ENCODE measurements at regions of chr14 and their contacts with region 1.

Region 1: DNA sequence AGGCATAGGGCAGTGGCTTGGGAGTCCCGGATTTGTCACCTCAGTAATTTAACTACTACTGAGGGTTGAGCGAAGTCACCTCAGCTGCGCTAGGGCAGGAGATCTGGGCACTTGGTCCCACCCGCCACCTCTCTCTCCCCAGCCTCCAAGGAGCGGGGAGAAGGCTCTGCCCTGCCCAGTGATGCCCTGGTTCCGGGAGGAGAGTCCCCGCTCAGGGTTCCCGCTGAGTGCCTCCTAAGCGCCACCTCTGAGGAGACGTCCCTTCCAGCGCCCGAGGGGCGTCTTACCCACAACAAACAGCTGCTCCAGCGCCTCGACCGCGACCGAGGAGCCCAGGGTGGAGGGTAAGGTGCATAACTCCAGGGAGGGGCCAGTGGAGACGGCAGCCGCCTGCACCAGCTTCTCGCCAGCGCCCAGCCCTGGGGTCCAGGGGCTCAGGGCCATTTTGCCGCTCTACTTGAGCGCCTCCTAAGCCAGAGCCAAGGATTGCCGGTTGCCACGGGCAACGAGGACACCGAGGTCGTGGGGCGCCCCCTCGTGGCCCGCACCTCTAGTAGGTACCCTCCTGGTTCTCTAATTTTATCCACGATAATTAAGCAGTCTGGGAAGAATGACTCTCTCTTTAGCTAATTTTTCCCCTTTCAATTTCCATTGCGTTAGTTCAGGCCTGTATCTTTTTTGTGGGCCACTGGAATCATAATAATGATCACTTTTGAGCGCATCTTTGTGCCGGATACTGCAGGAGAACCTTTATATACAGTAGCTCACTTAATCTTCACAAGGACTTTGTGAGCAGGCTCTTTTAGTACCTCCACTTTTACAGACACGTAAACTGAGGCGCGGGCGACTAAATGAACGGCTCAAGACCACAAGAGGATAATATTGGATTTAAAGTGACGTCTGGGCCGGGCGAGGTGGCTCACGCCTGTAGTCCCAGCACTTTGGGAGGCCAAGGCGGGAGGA is at the start of gene CCDC175:
- DNase-seq: peak; percentile 89
- H3K4me3 ChIP-seq: peak within 1 kb of the TSS; percentile 48 to 59
- H3K27ac ChIP-seq: no peak within 1 kb of the TSS; a peak in 1 of 4 replicates
- H3K4me1 ChIP-seq: peaks cover 0 to 4% of the 10 kb centered on the region in 2 experiments; a peak in 2 of 4 replicates
- H3K27me3 ChIP-seq: peaks cover 6% of the 10 kb centered on the region; the same call in 1 of the 2 replicates
- CTCF ChIP-seq: peak; percentile 78
- EP300 ChIP-seq: no peak
- RAD21 ChIP-seq: peak; percentile 82
- polyA plus RNA-seq, gene CCDC175: not detected in 2 replicates

Region 2: DNA sequence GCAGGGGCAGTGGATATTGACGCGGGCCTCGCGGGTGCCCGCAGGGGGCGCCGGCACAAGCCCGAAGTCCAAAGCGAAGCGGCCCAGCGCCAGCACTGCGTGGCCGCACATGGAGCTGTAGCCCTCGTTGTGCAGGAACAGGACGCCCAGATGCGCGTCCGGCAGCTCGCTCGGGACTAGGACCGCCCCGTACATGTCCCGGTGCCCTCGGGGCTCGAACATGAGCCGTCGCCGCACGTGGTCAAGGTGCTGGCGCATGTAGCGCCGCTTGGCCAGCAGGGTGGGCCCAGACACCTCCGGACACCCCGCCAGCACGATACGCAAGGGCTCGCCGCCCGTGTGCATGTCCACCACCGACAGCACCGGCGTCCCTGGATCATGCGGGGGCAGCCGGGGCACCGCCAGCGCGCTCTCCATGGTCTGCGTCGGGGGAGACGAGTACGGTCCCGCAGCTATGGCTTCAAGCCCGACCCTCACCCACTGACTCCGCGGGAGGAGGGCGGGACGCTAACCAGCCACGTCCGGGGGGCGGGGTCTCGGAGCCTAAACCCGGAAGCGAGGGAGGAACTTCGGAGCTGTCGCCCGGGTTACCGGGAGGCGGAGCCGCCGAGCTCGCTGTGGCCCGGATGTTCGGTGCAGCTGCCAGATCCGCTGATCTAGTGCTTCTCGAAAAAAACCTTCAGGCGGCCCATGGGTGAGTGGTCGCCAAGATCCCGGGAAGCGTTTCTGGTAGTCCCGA is 92.5 kb before region 1 on chr14 and contains the starts of genes JKAMP and L3HYPDH:
- CTCF ChIA-PET with region 1: interaction called, 20 read pairs
- POLR2A ChIA-PET with region 1: interaction called, 3 read pairs
- DNase-seq: peak; percentile 98
- H3K4me3 ChIP-seq: peak within 1 kb of the TSS; percentile 68 to 89
- H3K27ac ChIP-seq: peak within 1 kb of the TSS; percentile 97 to 99
- H3K4me1 ChIP-seq: peaks cover 12 to 26% of the 10 kb centered on the region in 2 experiments; a peak in 3 of 4 replicates
- H3K27me3 ChIP-seq: no peaks in the 10 kb centered on the region
- CTCF ChIP-seq: peak; percentile 67
- EP300 ChIP-seq: no peak; a peak in 2 of 4 replicates
- RAD21 ChIP-seq: no peak
- polyA plus RNA-seq, gene JKAMP: 95.4 and 146 TPM in 2 replicates
- polyA plus RNA-seq, gene L3HYPDH: 66.2 and 120 TPM in 2 replicates

Region 3: DNA sequence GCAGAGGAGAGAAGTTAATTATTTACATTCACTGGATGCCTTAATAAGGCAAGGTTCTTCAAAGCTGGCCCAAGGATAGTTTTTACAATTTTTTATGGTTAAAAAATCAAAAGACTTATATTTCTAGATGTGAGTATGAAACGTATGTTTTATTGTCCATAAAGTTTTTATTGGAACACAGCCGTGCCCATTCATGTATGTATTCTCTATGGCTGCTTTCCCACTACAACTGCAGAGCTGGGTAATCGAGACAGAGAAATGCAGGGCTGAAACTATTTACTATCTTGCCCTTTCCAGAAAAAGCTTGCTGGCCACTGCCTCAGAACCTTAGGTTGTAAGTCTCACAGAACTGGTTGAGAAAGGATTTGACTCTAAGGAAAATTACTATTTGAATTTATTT is 75.9 kb before region 1 on chr14:
- CTCF ChIA-PET with region 1: interaction called, 37 read pairs
- POLR2A ChIA-PET with region 1: no interaction called
- DNase-seq: no peak
- H3K4me3 ChIP-seq: no peak overlapping the region
- H3K27ac ChIP-seq: no peak overlapping the region
- H3K4me1 ChIP-seq: no peaks in the 10 kb centered on the region
- H3K27me3 ChIP-seq: no peaks in the 10 kb centered on the region
- CTCF ChIP-seq: no peak
- EP300 ChIP-seq: no peak
- RAD21 ChIP-seq: no peak

Region 4: GRCh38 chr14:59529189-59529588 is 47.4 kb before region 1 on chr14:
- CTCF ChIA-PET with region 1: interaction called, 17 read pairs
- POLR2A ChIA-PET with region 1: no interaction called
- DNase-seq: no peak
- H3K4me3 ChIP-seq: no peak overlapping the region
- H3K27ac ChIP-seq: no peak overlapping the region
- H3K4me1 ChIP-seq: no peaks in the 10 kb centered on the region
- H3K27me3 ChIP-seq: no peaks in the 10 kb centered on the region
- CTCF ChIP-seq: no peak
- EP300 ChIP-seq: no peak
- RAD21 ChIP-seq: no peak

Region 5: DNA sequence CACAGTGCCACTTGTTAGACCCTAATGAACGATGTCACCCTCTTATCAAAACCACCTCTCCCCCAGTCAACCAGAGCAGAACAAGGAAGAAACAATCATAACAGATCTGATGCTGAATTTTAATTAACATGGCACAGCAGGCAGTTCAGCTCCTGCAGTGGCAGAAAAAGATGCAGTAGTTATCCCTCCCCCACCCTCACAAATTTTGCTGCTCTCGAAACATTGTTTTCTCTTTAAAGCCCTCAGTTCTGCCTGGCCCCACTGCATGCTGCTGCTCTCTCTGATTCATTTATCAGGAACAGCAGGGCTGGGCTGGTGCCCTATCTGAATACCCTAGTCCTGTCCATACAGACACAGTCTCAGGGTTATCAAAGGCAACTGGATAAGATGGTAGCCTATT is 12.2 kb before region 1 on chr14:
- CTCF ChIA-PET with region 1: interaction called, 63 read pairs
- POLR2A ChIA-PET with region 1: no interaction called
- DNase-seq: no peak
- H3K4me3 ChIP-seq: no peak overlapping the region
- H3K27ac ChIP-seq: no peak overlapping the region
- H3K4me1 ChIP-seq: peaks cover 0 to 7% of the 10 kb centered on the region in 2 experiments; a peak in 2 of 4 replicates
- H3K27me3 ChIP-seq: no peaks in the 10 kb centered on the region; the same call in 1 of the 2 replicates
- CTCF ChIP-seq: no peak
- EP300 ChIP-seq: no peak
- RAD21 ChIP-seq: no peak

Region 6: DNA sequence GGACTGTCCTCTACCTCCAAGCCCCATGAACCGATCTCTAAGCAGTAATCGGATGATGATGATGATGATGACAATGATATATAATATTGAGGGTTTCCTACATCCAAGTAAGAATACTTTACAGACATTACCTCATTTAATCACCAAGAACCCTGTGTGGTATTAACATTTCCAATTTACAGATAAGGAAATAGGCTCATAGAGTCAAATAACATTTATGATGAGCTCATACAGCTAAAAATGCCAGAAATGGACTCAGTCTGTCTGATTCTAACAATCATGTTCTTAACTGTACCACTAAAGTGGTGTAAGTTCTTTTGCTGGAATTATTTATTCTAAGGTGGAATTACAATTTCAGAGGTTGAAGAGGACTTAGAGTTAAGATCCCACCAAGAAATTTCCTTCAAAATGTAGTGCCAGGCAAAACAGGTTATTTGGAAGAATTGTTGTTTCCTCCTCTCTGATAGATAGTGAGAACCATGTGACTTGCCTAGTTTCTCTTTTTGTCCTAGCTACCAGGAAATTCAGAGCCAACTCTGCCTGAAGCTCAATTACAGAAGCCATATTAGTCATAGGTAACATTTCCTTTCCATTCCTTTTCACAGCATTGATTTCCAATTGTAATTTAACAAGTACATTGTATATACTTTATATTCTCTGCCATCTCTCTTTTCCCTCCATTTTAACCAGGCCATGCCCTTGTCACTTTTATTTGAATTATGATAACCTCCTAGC is 23.8 kb after region 1 on chr14:
- CTCF ChIA-PET with region 1: interaction called, 73 read pairs
- POLR2A ChIA-PET with region 1: no interaction called
- DNase-seq: no peak
- H3K4me3 ChIP-seq: no peak overlapping the region
- H3K27ac ChIP-seq: no peak overlapping the region
- H3K4me1 ChIP-seq: no peaks in the 10 kb centered on the region
- H3K27me3 ChIP-seq: no peaks in the 10 kb centered on the region
- CTCF ChIP-seq: no peak
- EP300 ChIP-seq: no peak
- RAD21 ChIP-seq: no peak